Activated CD4-positive, alpha-beta T cell treated with anti-CD3 and anti-CD28 coated beads, Interleukin-2, amount 10 ng/mL, durations not matched to agents 24 days and 14 days (primary cell): ENCODE measurements at regions of chr1 and their contacts with region 1.

Region 1: GRCh38 chr1:66968574-66968973 is 43.8 kb downstream of the MIER1 start:
- DNase-seq: no peak
- H3K4me3 Mint-ChIP-seq: no peak overlapping the region
- H3K27ac Mint-ChIP-seq: no peak overlapping the region
- H3K4me1 Mint-ChIP-seq: peaks cover 9% of the 10 kb centered on the region
- H3K27me3 Mint-ChIP-seq: no peaks in the 10 kb centered on the region

Region 2: DNA sequence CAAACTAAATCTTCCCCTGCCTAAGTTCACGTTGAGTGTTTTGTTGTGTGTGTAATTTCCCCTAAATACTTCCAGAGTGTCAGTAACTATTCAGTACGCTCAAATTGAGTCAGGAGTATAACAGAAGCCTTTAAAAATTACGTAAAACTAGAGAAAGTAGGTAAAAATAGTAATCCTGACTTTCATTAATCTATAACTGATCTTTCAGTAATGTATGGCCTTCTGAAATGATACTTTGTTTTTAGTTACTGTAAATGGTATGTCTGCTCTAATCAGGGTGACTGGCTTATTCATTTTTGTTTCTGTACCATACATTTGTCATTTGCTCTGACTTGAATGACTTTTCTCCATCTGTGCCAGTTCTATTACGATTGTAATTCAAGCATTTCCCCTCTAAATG is 14.4 kb before region 1 on chr1:
- intact Hi-C with region 1: no loop called
- DNase-seq: no peak
- H3K4me3 Mint-ChIP-seq: no peak overlapping the region
- H3K27ac Mint-ChIP-seq: peak overlapping the region; percentile 56
- H3K4me1 Mint-ChIP-seq: peaks cover 28% of the 10 kb centered on the region
- H3K27me3 Mint-ChIP-seq: no peaks in the 10 kb centered on the region

Region 3: GRCh38 chr1:66981679-66982078 is 13.1 kb after region 1 on chr1:
- intact Hi-C with region 1: loop called (anchors 2 kb)
- DNase-seq: peak; percentile 88
- H3K4me3 Mint-ChIP-seq: peak overlapping the region; percentile 79
- H3K27ac Mint-ChIP-seq: peak overlapping the region; percentile 35
- H3K4me1 Mint-ChIP-seq: peaks cover 27% of the 10 kb centered on the region
- H3K27me3 Mint-ChIP-seq: no peaks in the 10 kb centered on the region